AG04449 (cell line): ENCODE measurements at regions of chr7 and their contacts with region 1.

Region 1: DNA sequence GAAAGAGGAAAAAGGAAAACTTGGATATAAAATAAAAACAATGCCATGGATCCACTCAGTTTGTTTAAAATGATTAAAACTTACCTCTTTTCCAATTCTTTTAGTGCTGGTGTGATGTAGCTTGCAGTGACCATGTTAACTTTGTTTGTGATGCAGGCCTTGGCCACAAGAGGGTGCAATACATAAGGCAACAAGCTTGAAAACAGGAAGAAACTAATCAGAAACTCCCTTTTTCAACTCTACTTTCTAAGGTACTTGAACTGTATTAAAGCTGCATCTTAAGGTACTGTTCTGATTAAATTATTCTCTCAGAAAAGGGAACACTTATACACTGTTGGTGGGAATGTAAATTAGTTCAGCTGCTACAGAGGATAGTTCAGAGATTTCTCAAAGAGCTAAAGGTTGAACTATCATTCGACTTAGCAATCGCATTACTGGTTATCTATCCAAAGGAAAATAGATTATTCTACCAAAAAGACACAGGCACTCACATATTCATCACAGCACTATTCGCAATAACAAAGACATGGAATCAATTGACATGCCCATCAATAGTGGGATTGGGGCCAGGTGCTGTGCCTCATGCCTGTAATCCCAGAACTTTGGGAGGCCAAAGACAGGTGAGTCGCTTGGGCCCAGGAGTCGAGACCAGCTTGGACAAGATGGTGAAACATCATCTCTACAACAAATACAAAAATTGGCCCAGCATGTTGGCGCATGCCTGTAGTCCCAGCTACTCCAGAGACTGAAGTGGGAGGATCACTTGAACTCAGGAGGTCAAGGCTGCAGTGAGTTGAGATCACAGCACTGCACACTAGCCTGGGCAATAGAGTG is 50.9 kb downstream of the AASS start:
- DNase-seq: peak; percentile 44
- H3K4me3 ChIP-seq: no peak overlapping the region
- CTCF ChIP-seq: peak; percentile 82

Region 2: GRCh38 chr7:122082670-122083069 is 10.5 kb before region 1 on chr7:
- CTCF ChIA-PET with region 1: interaction called, 16 read pairs
- POLR2A ChIA-PET with region 1: no interaction called
- DNase-seq: no peak
- H3K4me3 ChIP-seq: no peak overlapping the region
- CTCF ChIP-seq: no peak

Region 3: DNA sequence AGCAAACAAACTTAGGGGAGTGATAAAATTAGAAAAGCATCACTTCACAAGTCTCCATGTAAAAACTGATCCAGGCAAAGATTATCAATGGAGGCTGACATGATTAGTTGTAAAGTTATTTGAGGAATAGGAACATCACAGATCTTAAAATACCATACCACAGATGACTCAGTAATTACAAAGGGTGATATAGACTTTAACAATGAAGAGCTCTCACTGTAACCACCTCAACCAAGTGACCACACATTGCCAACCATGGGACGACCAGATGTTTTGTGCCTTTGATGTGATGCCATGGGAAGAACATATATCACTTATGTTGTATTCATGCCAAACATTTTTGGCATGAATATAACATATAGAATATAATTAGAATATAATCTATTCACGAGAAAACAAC is 39.2 kb after region 1 on chr7:
- CTCF ChIA-PET with region 1: interaction called, 10 read pairs
- POLR2A ChIA-PET with region 1: no interaction called
- DNase-seq: no peak
- H3K4me3 ChIP-seq: no peak overlapping the region
- CTCF ChIP-seq: no peak

Region 4: DNA sequence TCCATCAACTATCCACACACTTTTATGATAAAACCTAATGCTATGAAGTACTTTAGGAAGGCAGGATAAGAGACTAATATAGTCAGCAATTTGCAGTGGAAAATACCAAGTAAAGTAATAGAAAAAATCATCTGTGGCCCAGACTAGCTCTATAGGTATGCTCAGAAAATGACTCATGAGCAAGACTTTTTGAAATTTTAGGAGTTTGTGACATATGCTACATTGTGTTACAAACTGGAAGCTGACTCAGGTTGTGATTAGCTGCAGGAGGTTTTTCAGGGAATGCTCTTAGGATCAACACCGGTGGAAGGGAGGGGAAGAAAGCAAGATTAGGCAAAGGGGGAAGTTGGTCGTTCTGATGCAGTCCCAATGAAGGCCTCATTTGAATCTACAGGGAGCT is 155.3 kb after region 1 on chr7:
- CTCF ChIA-PET with region 1: no interaction called
- POLR2A ChIA-PET with region 1: no interaction called
- DNase-seq: no peak
- H3K4me3 ChIP-seq: no peak overlapping the region
- CTCF ChIP-seq: no peak

Region 5: GRCh38 chr7:122528879-122529481 is 435.8 kb after region 1 on chr7:
- CTCF ChIA-PET with region 1: interaction called, 11 read pairs
- POLR2A ChIA-PET with region 1: no interaction called
- DNase-seq: no peak
- H3K4me3 ChIP-seq: no peak overlapping the region
- CTCF ChIP-seq: no peak